Activated T-helper 1 cell treated with anti-CD3 and anti-CD28 coated beads, Interleukin-12 subunit alpha, Interleukin-12 subunit beta, Interleukin-2, Interleukin-4 antibody, amounts not matched to agents 30 ng/mL and 10 ng/mL and 1 ng/mL, durations not matched to agents 14 hours and 24 hours and 36 hours (primary cell): ENCODE measurements at regions of chr3 and their contacts with region 1.

Region 1: GRCh38 chr3:4406746-4407568 is 60.1 kb downstream of the SUMF1 start:
- DNase-seq: no peak
- H3K4me3 Mint-ChIP-seq: no peak overlapping the region
- H3K27ac Mint-ChIP-seq: no peak overlapping the region
- H3K4me1 Mint-ChIP-seq: peaks cover 57% of the 10 kb centered on the region
- H3K27me3 Mint-ChIP-seq: peaks cover 1% of the 10 kb centered on the region

Region 2: GRCh38 chr3:4394048-4394447 is 12.9 kb before region 1 on chr3:
- intact Hi-C with region 1: loop called (anchors 1 kb)
- DNase-seq: peak; percentile 13
- H3K4me3 Mint-ChIP-seq: peak overlapping the region; percentile 22
- H3K27ac Mint-ChIP-seq: peak overlapping the region; percentile 78
- H3K4me1 Mint-ChIP-seq: peaks cover 57% of the 10 kb centered on the region
- H3K27me3 Mint-ChIP-seq: peaks cover 1% of the 10 kb centered on the region

Region 3: DNA sequence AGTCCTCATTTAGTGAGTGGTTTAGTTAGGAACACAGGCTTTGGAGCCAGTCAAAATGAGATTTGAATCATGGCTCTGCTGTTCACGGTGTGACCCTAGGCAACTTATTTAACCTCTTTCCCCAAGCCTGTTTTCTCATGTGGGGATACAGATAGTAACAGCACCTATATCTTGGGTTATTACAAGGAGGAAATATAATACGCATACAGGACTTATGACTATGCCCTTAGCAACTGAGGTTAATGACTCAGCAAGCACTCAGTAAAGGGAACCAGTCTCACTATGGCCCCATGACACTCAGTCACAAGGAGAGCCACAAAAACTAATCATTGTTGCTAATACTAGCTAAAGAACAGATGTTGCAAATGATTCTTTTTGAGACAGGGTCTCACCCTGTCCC is 14.2 kb after region 1 on chr3:
- intact Hi-C with region 1: loop called (anchors 1 kb)
- DNase-seq: no peak
- H3K4me3 Mint-ChIP-seq: peak overlapping the region; percentile 25
- H3K27ac Mint-ChIP-seq: peak overlapping the region; percentile 57
- H3K4me1 Mint-ChIP-seq: peaks cover 25% of the 10 kb centered on the region
- H3K27me3 Mint-ChIP-seq: no peaks in the 10 kb centered on the region

Region 4: DNA sequence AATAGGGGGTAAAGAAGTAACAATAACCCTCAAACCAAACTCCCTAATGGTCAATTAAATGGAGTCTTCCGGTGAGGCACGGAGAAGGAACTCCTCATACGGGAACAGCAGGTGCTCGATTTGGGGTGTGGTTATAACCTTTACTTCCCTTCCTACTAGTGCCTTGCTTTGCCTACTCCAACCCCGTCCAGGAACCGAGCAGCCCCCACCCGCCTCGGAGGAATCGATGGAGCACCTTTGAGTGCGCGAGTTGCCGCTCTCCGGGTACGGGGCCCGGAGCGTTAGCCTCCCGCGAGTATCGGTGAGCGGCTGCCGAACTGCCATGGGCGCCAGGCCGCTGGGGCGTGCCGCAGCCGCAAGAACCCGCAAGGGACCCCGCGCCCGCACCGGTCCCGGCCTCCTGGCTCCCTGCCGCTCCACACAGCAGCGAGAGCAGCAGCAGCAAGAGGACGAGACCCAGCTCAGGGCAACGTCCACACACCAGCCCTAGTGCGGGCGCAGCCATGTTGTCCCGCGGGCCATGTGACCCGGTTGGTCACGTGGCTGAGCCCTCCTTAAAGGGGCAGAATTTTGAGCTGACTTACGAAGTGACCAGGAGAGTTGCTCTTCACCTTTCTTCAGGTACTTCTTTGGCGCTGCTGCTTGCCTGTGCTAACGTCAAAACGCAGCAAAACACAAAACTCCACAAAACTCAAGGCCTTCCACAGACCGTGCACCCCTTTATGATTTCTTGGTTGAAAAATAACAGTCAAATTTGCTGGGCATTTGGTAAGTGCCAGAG is 60.0 kb after region 1 on chr3 and contains the start of gene SUMF1:
- intact Hi-C with region 1: loop called (anchors 1 kb)
- DNase-seq: peak; percentile 68
- H3K4me3 Mint-ChIP-seq: peak within 1 kb of the TSS; percentile 95
- H3K27ac Mint-ChIP-seq: peak within 1 kb of the TSS; percentile 91
- H3K4me1 Mint-ChIP-seq: peaks cover 15% of the 10 kb centered on the region
- H3K27me3 Mint-ChIP-seq: peaks cover 2% of the 10 kb centered on the region
- total RNA-seq, gene SUMF1: 6.1 and 7.0 TPM in 2 replicates